A549 (cell line): ENCODE measurements at regions of chr1 and their contacts with region 1.

Region 1: DNA sequence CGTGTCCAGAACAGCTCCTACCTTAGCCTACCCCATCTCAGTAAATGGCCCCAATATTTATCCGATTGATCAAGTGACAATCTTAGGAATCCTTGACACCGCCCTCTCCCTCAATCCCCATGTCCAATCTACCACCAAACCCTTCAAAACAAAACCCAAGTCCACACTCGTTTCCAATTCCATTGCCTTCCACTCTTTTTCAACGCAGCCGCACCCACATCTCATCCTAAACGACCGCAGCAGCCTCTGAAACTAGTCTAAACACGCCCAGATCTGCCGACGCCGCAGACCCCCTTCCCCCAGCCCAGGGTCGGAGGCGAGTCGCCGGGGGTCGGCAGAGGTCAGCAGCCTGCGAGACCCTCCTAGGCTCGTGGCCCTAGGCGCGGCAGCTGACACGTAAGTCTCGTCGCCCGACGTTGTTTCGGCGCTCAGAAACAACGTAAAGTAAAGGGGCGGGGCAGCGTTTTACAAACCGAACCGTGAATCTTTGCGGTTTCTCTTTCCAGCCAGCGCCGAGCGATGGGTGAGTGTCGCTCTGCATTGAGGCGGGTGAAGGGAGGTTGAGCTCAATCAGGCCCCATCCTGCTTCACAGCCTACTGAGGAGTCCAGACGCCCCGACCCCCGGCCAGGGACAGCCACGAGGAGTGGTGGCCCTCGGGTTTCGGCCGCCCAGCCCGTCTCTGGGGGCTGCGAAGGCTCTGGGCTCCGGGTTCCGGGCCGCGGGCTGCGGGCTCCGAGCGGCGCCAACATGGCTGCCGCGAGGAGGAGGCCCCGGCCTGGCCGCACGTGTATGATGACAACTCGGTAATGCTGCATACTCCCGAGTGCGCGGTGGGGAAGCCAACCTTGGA is at the start of gene RPS8:
- DNase-seq: peak; percentile 65 to 93
- ATAC-seq: peak; percentile 83 to 92
- H3K4me3 ChIP-seq: peak within 1 kb of the TSS; percentile 96
- H3K27ac ChIP-seq: peak within 1 kb of the TSS; percentile 98 to 99
- H3K4me1 ChIP-seq: peaks cover 22% of the 10 kb centered on the region
- CTCF ChIP-seq: no peak
- EP300 ChIP-seq: no peak
- POLR2A ChIP-seq: peak; percentile 97
- RAD21 ChIP-seq: no peak
- polyA plus RNA-seq, gene RPS8: 1,515 and 1,820 TPM in 2 replicates

Region 2: GRCh38 chr1:44460107-44460882 is 315.0 kb before region 1 on chr1:
- CTCF ChIA-PET with region 1: no interaction called
- POLR2A ChIA-PET with region 1: no interaction called
- DNase-seq: no peak
- ATAC-seq: no peak
- H3K4me3 ChIP-seq: no peak overlapping the region
- H3K27ac ChIP-seq: no peak overlapping the region
- H3K4me1 ChIP-seq: no peaks in the 10 kb centered on the region
- CTCF ChIP-seq: no peak
- EP300 ChIP-seq: no peak
- POLR2A ChIP-seq: no peak
- RAD21 ChIP-seq: no peak

Region 3: GRCh38 chr1:44594871-44595746 is 180.2 kb before region 1 on chr1:
- CTCF ChIA-PET with region 1: no interaction called
- POLR2A ChIA-PET with region 1: no interaction called
- DNase-seq: peak; percentile 47 to 90
- ATAC-seq: peak; percentile 97 to 99
- H3K4me3 ChIP-seq: no peak overlapping the region
- H3K27ac ChIP-seq: no peak overlapping the region
- H3K4me1 ChIP-seq: no peaks in the 10 kb centered on the region
- CTCF ChIP-seq: peak; percentile 77
- EP300 ChIP-seq: no peak
- POLR2A ChIP-seq: no peak
- RAD21 ChIP-seq: peak; percentile 91 to 93

Region 4: GRCh38 chr1:44730741-44731512 is 44.4 kb before region 1 on chr1 and contains the start of gene RNU5D-1:
- CTCF ChIA-PET with region 1: interaction called, 10 read pairs
- POLR2A ChIA-PET with region 1: interaction called, 17 read pairs
- DNase-seq: peak; percentile 72 to 94
- ATAC-seq: peak; percentile 90 to 93
- H3K4me3 ChIP-seq: peak within 1 kb of the TSS; percentile 35
- H3K27ac ChIP-seq: peak within 1 kb of the TSS; percentile 86 to 94
- H3K4me1 ChIP-seq: peaks cover 19% of the 10 kb centered on the region
- CTCF ChIP-seq: peak; percentile 68
- EP300 ChIP-seq: no peak
- POLR2A ChIP-seq: peak; percentile 81
- RAD21 ChIP-seq: no peak
- polyA plus RNA-seq, gene RNU5D-1: not detected in 2 replicates

Region 5: DNA sequence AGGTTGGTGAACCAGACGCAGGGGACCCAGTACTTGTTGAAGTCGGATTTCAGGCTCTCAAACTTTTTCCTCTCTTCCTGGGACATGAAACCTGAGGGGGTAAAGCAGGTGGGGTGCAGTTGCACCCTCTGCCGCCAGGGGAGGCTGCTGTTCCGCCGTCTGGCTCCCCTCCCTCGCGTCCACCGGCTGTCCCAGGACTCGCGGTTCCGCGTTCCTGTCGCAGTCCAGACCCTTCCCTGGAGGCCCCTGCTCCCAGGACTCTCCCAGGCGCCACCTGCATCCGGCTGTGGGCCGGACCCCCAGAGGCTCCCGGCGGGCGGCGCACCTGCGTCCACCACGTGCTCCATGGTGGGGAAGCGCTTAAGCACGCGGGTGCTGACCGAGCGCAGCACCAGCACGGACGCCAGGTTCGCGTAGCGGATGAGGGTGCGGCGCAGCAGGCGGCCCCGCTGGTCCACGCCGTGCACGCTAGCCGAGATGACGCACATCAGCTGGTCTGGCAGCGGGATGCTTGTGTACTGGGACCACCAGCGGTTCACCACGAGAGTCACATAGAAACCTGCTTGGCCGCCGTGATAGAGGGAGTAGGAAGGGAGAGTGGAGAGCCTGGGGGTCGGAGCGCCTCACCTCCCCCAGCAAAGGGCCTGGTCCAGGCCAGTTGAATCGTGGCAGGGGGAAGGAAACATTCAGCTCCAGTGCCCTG is 11.0 kb after region 1 on chr1:
- CTCF ChIA-PET with region 1: interaction called, 5 read pairs
- POLR2A ChIA-PET with region 1: interaction called, 11 read pairs
- DNase-seq: peak; percentile 75 to 77
- ATAC-seq: peak; percentile 63 to 70
- H3K4me3 ChIP-seq: peak overlapping the region; percentile 49
- H3K27ac ChIP-seq: peak overlapping the region; percentile 89 to 93
- H3K4me1 ChIP-seq: peaks cover 6% of the 10 kb centered on the region
- CTCF ChIP-seq: peak; percentile 76
- EP300 ChIP-seq: no peak
- POLR2A ChIP-seq: peak; percentile 40
- RAD21 ChIP-seq: peak; percentile 68 to 74

Region 6: DNA sequence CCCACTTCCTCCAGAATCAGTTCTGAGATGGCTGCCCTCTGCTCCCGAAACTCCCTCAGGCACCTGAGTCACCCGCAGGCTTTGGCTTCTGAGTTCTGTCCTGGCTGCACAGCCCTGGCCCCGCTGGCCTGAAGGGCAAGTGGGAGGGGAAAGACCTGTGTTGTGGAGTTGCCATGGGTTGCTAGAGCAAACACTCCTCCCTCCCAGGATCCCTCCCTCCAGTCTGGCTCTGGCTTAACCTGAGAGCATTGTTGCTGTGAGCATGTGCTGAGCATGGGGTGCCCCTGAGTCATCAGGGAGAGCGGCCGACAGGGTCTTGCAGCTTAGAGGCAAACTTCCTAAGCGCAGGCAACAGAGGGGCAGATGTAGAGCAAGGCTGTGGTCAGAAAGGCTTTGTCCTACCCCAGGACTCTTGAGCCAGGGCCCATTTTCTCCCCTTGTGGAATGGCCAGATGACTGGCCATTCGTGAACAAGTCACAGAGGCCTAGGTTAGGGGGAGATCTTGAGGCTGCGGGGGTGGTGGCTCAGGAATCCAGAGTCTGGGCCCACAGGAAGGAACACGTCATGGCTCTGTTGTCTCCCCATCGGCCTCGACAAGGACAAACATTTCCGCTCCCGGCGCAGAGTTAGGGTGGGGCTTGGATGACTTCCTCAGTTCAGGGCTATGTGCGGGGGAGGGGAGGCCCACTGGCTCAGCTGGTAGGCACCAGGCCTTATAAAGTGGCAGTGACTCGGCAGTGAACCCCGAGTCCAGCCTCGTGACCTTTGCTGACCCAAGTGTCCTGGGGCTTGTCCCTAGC is 32.2 kb after region 1 on chr1 and contains the start of gene DYNLT4:
- CTCF ChIA-PET with region 1: no interaction called
- POLR2A ChIA-PET with region 1: interaction called, 13 read pairs
- DNase-seq: peak; percentile 90 to 97
- ATAC-seq: peak; percentile 77 to 80
- H3K4me3 ChIP-seq: 0 out of 3 replicates have a peak within 1 kb of the TSS, but pooled peaks have one; percentile 14
- H3K27ac ChIP-seq: peak within 1 kb of the TSS; percentile 98 to 99
- H3K4me1 ChIP-seq: peaks cover 80% of the 10 kb centered on the region
- CTCF ChIP-seq: no peak
- EP300 ChIP-seq: peak in 1 of 2 experiments; percentile 64; a peak in 2 of 5 replicates
- POLR2A ChIP-seq: peak; percentile 22; the same call in 1 of the 2 replicates
- RAD21 ChIP-seq: no peak; a peak in 1 of 5 replicates
- polyA plus RNA-seq, gene DYNLT4: 0.21 TPM in 1 of 2 replicates, not detected in the other

Region 7: DNA sequence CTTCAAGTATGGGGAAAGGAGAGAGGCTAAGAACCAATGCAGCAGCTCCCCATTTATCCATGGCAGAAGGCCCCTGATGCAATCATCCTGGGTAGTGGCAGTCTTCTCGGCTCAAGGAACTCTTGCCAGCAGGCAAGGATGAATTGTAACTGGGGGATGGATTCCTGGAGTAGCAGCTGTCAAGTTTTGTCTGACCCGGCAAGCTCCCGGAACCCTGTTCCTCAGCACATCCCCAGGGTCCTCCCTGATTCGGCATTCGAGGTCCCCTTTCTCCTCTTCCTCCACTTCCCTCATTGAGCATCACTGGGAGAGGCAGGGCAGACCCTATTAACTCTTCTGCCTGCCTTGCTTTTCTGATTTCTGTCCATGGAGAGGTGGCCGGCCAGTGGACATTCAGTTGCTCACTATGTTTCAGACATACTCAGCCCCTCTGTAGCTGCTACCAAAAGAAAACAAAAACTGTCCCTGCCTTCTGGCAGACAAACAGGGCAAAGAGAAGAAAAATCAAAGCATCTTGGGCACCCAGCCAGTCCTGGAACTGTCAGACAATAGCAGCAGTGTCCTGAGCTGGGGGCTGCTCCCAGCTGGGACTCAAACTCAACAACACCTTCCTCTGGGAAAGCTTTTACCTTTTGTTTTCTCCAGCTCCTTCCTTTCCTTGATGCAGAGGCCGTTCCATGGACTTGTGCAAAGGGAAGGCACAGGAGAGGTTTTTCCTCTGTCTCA is 73.3 kb after region 1 on chr1:
- CTCF ChIA-PET with region 1: no interaction called
- POLR2A ChIA-PET with region 1: no interaction called
- DNase-seq: no peak
- ATAC-seq: no peak
- H3K4me3 ChIP-seq: no peak overlapping the region
- H3K27ac ChIP-seq: no peak overlapping the region
- H3K4me1 ChIP-seq: no peaks in the 10 kb centered on the region
- CTCF ChIP-seq: no peak
- EP300 ChIP-seq: no peak
- POLR2A ChIP-seq: no peak
- RAD21 ChIP-seq: no peak